Breast epithelium (tissue), 4 donors: ENCODE measurements at regions of chr14 and their contacts with region 1.

Region 1: DNA sequence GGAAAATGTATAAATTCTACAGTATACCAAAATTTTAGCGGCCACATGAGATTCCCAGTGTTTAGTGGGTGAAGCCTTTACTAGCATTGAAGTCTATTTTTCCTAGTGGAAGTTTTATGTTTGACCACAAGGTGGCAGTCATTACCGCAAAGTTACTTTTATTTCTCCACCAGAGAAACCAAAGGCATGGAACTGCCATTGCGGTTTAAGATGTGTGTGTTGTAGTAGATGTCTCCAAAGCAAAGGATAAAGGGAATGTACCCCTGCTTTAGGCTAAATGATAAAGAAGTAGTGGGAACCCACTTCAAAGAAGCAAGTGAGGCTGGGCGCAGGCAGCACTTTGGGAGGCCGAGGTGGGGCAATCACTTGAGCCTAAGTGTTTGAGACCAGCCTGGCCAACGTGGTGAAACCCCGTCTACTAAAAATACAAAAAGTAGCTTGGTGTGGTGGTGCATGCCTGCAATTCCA is 140.5 kb downstream of the PRKCH start:
- DNase-seq: no peak
- H3K4me3 ChIP-seq: no peak overlapping the region
- H3K27ac ChIP-seq: no peak overlapping the region
- H3K4me1 ChIP-seq: no peaks in the 10 kb centered on the region
- H3K27me3 ChIP-seq: no peaks in the 10 kb centered on the region
- CTCF ChIP-seq: peak; percentile 80 to 86 (median 80)
- POLR2A ChIP-seq: no peak

Region 2: GRCh38 chr14:61525293-61526011 is 63.6 kb after region 1 on chr14:
- intact Hi-C with region 1: no loop called
- DNase-seq: peak; percentile 86 to 89
- H3K4me3 ChIP-seq: no peak overlapping the region
- H3K27ac ChIP-seq: peak overlapping the region; percentile 87 to 92
- H3K4me1 ChIP-seq: peaks cover 3 to 24% of the 10 kb centered on the region in 2 donors
- H3K27me3 ChIP-seq: no peaks in the 10 kb centered on the region
- CTCF ChIP-seq: no peak
- POLR2A ChIP-seq: no peak

Region 3: GRCh38 chr14:61730756-61731373 is 269.0 kb after region 1 on chr14:
- intact Hi-C with region 1: loop called (anchors 10 kb)
- DNase-seq: no peak
- H3K4me3 ChIP-seq: no peak overlapping the region
- H3K27ac ChIP-seq: no peak overlapping the region
- H3K4me1 ChIP-seq: no peaks in the 10 kb centered on the region
- H3K27me3 ChIP-seq: no peaks in the 10 kb centered on the region
- CTCF ChIP-seq: peak in 2 of 3 donors; percentile 35 to 63
- POLR2A ChIP-seq: no peak

Region 4: GRCh38 chr14:61837336-61838229 is 375.7 kb after region 1 on chr14:
- intact Hi-C with region 1: loop called (anchors 10 kb)
- DNase-seq: peak; percentile 65 to 76
- H3K4me3 ChIP-seq: no peak overlapping the region
- H3K27ac ChIP-seq: no peak overlapping the region
- H3K4me1 ChIP-seq: no peaks in the 10 kb centered on the region
- H3K27me3 ChIP-seq: no peaks in the 10 kb centered on the region
- CTCF ChIP-seq: peak; percentile 80 to 91 (median 89)
- POLR2A ChIP-seq: no peak